ENCODE measurements at regions of chr6 and their contacts with region 1.

Region 1: GRCh38 chr6:56359201-56359899 is 112.0 kb upstream of the COL21A1 start:
- DNase-seq: peak in 3 of 6 donors; percentile 50 to 74 (median 52)
- ATAC-seq: peak; percentile 87 to 99 (median 97)
- H3K4me3 ChIP-seq: no peak overlapping the region
- H3K27ac ChIP-seq: no peak overlapping the region
- H3K4me1 ChIP-seq: no peaks in the 10 kb centered on the region
- H3K27me3 ChIP-seq: no peaks in the 10 kb centered on the region
- CTCF ChIP-seq: peak; percentile 49 to 70 (median 65)

Region 2: DNA sequence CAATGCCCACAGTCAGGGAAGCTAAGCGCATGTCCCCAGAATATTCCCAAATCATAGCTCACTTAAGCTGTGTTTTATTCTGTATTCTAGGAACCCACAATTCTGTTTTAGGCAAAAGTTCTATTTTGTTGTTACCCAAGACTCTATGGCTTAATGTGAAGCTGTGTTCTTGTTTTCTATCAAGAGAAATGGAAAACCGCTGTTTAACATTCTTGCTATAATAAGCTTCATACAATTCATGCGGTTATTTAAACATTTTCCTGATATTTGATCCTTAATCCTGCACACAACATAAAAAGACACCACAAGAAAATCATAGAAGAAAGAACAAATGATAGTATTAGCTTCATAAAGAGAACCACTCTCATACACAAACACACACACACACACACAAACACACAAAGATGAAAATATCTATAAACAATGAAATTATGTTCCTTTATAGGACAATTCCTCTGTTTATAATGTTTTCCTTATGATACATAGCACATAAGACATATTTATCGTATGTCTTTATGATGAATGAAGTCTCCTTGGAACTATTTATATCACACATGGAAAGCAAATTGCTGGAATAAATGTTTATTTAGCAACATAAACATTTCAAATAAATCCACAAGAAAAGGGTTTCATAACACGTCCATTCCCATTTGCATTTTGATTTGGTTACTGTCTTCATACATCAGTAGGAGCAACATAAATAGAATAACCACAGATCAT is 95.6 kb before region 1 on chr6:
- intact Hi-C with region 1: no loop called
- DNase-seq: no peak
- ATAC-seq: no peak
- H3K4me3 ChIP-seq: no peak overlapping the region
- H3K27ac ChIP-seq: no peak overlapping the region
- H3K4me1 ChIP-seq: no peaks in the 10 kb centered on the region
- H3K27me3 ChIP-seq: no peaks in the 10 kb centered on the region
- CTCF ChIP-seq: no peak

Region 3: DNA sequence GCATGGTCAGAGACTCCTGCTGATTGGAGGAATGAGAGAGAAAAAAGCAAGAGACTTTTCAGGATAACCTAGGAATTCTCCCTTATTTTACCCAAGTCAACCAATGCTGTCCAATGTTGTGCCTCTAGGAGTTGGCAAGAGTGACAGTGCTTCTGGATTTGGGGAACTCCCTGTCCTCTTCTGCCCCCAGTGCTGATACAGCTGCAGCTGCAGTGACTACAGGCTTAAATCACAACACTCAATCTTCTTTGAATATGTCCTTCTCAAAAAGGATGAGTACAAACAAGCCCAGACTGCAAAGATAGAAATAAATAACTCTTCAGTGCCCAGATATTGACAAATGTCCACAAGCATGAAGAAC is 29.0 kb after region 1 on chr6:
- intact Hi-C with region 1: no loop called
- DNase-seq: no peak
- ATAC-seq: peak in 2 of 4 donors; percentile 18 to 49
- H3K4me3 ChIP-seq: no peak overlapping the region
- H3K27ac ChIP-seq: no peak overlapping the region
- H3K4me1 ChIP-seq: peaks cover 0 to 8% (median 0%) of the 10 kb centered on the region in 3 donors
- H3K27me3 ChIP-seq: no peaks in the 10 kb centered on the region
- CTCF ChIP-seq: no peak

Region 4: GRCh38 chr6:56570413-56571359 is 211.3 kb after region 1 on chr6:
- intact Hi-C with region 1: loop called in 1 of 3 experiments (anchors 10 kb)
- DNase-seq: no peak
- ATAC-seq: peak; percentile 60 to 91 (median 86)
- H3K4me3 ChIP-seq: no peak overlapping the region
- H3K27ac ChIP-seq: no peak overlapping the region
- H3K4me1 ChIP-seq: no peaks in the 10 kb centered on the region
- H3K27me3 ChIP-seq: no peaks in the 10 kb centered on the region
- CTCF ChIP-seq: peak; percentile 20 to 54 (median 35)